ENCODE measurements at regions of chr2 and their contacts with region 1.

Region 1: DNA sequence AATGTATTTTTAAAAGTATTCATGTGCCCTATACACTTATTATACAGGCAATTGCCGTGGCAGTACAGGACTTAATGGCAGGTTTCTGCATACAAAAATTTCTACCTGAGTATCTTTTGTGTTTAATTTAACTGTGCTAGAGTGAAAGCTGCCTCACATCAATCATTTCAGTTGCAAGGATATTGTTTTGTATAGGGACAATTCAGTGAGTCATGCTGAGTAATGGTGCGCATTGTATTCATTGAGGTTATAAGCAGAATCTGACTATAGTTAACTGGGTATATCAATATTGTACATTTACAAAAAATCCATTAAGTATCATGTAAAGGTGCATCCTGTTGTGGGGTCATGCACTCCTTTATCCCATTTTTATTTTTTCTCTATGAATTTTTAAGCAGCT is 121.5 kb downstream of the GCA start:
- DNase-seq: no peak
- ATAC-seq: no peak
- H3K4me3 ChIP-seq: no peak overlapping the region
- H3K27ac ChIP-seq: no peak overlapping the region
- H3K4me1 ChIP-seq: no peaks in the 10 kb centered on the region
- H3K27me3 ChIP-seq: no peaks in the 10 kb centered on the region
- CTCF ChIP-seq: no peak
- POLR2A ChIP-seq: no peak
- RAD21 ChIP-seq: no peak

Region 2: DNA sequence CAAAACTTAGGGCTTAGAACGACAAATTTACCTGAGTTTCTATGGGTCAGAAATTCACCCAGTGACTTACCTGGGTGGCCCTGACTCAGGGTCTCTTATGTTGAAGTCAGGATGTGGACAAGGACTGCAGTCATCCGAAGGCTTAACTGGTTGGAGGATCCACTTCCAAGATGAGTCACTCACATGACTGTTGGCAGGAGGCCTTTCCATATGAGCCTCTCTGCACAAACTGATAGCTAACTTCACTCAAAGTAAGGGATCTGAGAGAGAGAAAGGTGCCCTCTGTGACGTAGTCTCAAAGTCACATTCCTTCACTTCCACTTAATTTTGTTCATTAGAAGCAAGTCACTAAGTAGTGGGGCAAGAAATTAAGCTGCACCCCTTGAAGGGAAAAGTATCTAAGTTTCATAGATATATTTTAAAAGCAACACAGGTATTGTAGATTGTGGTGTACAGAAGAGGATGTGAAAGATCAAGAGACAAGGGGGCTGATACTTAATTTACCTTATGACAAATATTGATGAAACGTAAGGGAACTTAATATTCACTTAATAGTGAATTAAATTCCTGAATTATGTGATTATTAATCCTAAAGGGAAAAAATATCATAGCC is 1256.8 kb before region 1 on chr2:
- CTCF ChIA-PET with region 1: no interaction called
- POLR2A ChIA-PET with region 1: interaction called, 13 read pairs
- dilution Hi-C with region 1: no loop called
- in situ Hi-C with region 1: no loop called
- intact Hi-C with region 1: no loop called
- DNase-seq: peak; percentile 92
- ATAC-seq: peak; percentile 85
- H3K4me3 ChIP-seq: no peak overlapping the region
- H3K27ac ChIP-seq: no peak overlapping the region
- H3K4me1 ChIP-seq: 0 out of 2 replicates have a peak, but pooled peaks cover 2% of the 10 kb centered on the region
- H3K27me3 ChIP-seq: no peaks in the 10 kb centered on the region
- CTCF ChIP-seq: no peak
- POLR2A ChIP-seq: no peak
- RAD21 ChIP-seq: no peak

Region 3: DNA sequence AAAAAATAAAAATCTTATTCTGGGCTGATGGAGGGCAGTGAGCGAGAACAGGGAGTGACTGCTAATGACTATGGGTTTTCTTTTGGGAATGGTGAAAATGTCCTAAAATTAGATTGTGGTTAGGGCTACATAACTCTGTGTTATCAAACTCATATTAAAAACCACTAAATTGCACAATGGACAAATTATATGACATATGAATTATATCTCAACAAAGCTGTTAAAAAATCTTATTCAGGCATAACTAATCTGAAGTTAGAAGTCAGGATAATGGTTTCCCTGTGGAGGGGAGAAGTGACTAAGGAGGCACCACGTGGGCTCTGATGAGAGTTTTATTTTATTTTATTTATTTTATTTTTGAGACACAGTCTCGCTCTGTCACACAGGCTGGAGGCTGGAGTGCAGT is 359.3 kb before region 1 on chr2:
- CTCF ChIA-PET with region 1: no interaction called
- POLR2A ChIA-PET with region 1: no interaction called
- dilution Hi-C with region 1: no loop called
- in situ Hi-C with region 1: no loop called
- intact Hi-C with region 1: no loop called
- DNase-seq: peak; percentile 25
- ATAC-seq: peak; percentile 73
- H3K4me3 ChIP-seq: no peak overlapping the region
- H3K27ac ChIP-seq: no peak overlapping the region
- H3K4me1 ChIP-seq: no peaks in the 10 kb centered on the region
- H3K27me3 ChIP-seq: no peaks in the 10 kb centered on the region
- CTCF ChIP-seq: no peak
- POLR2A ChIP-seq: no peak
- RAD21 ChIP-seq: no peak

Measured in IMR-90 (cell line).